Endothelial cell of umbilical vein (primary cell): ENCODE measurements at regions of chr11 and their contacts with region 1.

Region 1: GRCh38 chr11:27296497-27296896 is 66.5 kb downstream of the CCDC34 start:
- DNase-seq: peak; percentile 66
- H3K4me3 ChIP-seq: no peak overlapping the region
- H3K27ac ChIP-seq: no peak overlapping the region
- H3K4me1 ChIP-seq: no peaks in the 10 kb centered on the region
- H3K27me3 ChIP-seq: peaks cover 24% of the 10 kb centered on the region in 2 experiments
- CTCF ChIP-seq: peak; percentile 50 to 56
- POLR2A ChIP-seq: no peak

Region 2: GRCh38 chr11:26993965-26994457 is 302.5 kb before region 1 on chr11 and contains the start of gene FIBIN:
- CTCF ChIA-PET with region 1: no interaction called
- POLR2A ChIA-PET with region 1: no interaction called
- dilution Hi-C with region 1: no loop called
- intact Hi-C with region 1: no loop called
- DNase-seq: no peak
- H3K4me3 ChIP-seq: no peak within 1 kb of the TSS
- H3K27ac ChIP-seq: no peak within 1 kb of the TSS
- H3K4me1 ChIP-seq: no peaks in the 10 kb centered on the region
- H3K27me3 ChIP-seq: no peaks in the 10 kb centered on the region
- CTCF ChIP-seq: no peak
- POLR2A ChIP-seq: no peak
- total RNA-seq, gene FIBIN: not detected in 2 replicates

Region 3: GRCh38 chr11:27183672-27184457 is 112.6 kb before region 1 on chr11:
- CTCF ChIA-PET with region 1: interaction called, 253 read pairs
- POLR2A ChIA-PET with region 1: interaction called, 3 read pairs
- dilution Hi-C with region 1: no loop called
- intact Hi-C with region 1: loop called (anchors 1 kb)
- DNase-seq: peak; percentile 66
- H3K4me3 ChIP-seq: no peak overlapping the region
- H3K27ac ChIP-seq: no peak overlapping the region
- H3K4me1 ChIP-seq: no peaks in the 10 kb centered on the region
- H3K27me3 ChIP-seq: peaks cover 18 to 20% of the 10 kb centered on the region in 2 experiments
- CTCF ChIP-seq: peak; percentile 37 to 46
- POLR2A ChIP-seq: no peak

Region 4: DNA sequence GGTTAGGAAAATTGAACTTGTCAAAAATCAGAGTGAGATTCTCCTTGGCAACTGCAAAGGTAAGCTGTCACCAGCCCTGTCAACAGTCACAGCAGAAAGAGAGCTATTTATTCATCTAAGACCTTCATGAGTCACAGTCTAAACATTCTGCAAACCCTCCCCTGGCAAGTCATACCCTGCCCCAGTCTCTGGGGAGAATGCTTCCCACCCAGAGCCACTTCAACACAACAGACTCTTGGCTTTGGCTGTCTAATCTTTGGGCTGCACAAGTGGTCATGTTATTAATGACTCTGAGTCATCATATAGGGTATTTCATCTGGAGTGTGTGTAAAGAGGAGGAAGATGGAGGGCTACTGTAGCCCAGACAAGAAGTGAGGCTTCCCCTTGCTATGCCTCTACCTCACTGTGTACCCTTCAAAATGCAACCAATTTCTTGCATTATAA is 86.9 kb before region 1 on chr11:
- CTCF ChIA-PET with region 1: interaction called, 183 read pairs
- POLR2A ChIA-PET with region 1: no interaction called
- dilution Hi-C with region 1: no loop called
- intact Hi-C with region 1: loop called (anchors 5 kb)
- DNase-seq: peak; percentile 64
- H3K4me3 ChIP-seq: no peak overlapping the region
- H3K27ac ChIP-seq: no peak overlapping the region
- H3K4me1 ChIP-seq: peaks cover 12% of the 10 kb centered on the region
- H3K27me3 ChIP-seq: peaks cover 68 to 71% of the 10 kb centered on the region in 2 experiments
- CTCF ChIP-seq: no peak
- POLR2A ChIP-seq: no peak

Region 5: GRCh38 chr11:27242591-27242990 is 53.9 kb before region 1 on chr11:
- CTCF ChIA-PET with region 1: interaction called, 10 read pairs
- POLR2A ChIA-PET with region 1: no interaction called
- dilution Hi-C with region 1: no loop called
- intact Hi-C with region 1: no loop called
- DNase-seq: no peak
- H3K4me3 ChIP-seq: no peak overlapping the region
- H3K27ac ChIP-seq: no peak overlapping the region
- H3K4me1 ChIP-seq: no peaks in the 10 kb centered on the region
- H3K27me3 ChIP-seq: peaks cover 27 to 28% of the 10 kb centered on the region in 2 experiments
- CTCF ChIP-seq: no peak
- POLR2A ChIP-seq: no peak

Region 6: GRCh38 chr11:27281740-27282590 is 14.5 kb before region 1 on chr11:
- CTCF ChIA-PET with region 1: interaction called, 64 read pairs
- POLR2A ChIA-PET with region 1: interaction called, 4 read pairs
- dilution Hi-C with region 1: no loop called
- intact Hi-C with region 1: no loop called
- DNase-seq: peak; percentile 99
- H3K4me3 ChIP-seq: no peak overlapping the region
- H3K27ac ChIP-seq: peak overlapping the region; percentile 56
- H3K4me1 ChIP-seq: peaks cover 23% of the 10 kb centered on the region
- H3K27me3 ChIP-seq: peaks cover 13 to 17% of the 10 kb centered on the region in 2 experiments
- CTCF ChIP-seq: no peak
- POLR2A ChIP-seq: peak; percentile 90

Region 7: DNA sequence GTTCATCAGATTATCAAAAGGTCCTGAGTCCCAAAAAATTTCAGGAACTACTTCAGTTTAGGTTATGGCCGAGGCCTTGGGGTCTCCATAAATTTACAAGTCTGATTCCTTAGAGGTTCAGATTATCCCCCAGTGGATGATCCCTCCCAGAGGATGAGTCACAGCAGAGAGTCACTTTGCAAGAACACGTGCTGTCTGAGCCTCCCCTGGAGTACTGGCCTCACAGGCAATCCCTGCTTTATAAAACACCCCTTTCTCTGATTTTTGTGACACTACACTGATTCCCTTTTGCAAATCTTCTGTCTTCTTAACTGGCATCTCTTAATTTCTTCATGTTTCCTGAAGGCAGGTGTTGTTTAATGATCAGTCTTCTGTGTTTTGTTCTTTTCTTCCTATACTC is 21.3 kb after region 1 on chr11:
- CTCF ChIA-PET with region 1: interaction called, 36 read pairs
- POLR2A ChIA-PET with region 1: no interaction called
- dilution Hi-C with region 1: no loop called
- intact Hi-C with region 1: no loop called
- DNase-seq: no peak
- H3K4me3 ChIP-seq: no peak overlapping the region
- H3K27ac ChIP-seq: no peak overlapping the region
- H3K4me1 ChIP-seq: no peaks in the 10 kb centered on the region
- H3K27me3 ChIP-seq: no peaks in the 10 kb centered on the region
- CTCF ChIP-seq: no peak
- POLR2A ChIP-seq: no peak

Region 8: DNA sequence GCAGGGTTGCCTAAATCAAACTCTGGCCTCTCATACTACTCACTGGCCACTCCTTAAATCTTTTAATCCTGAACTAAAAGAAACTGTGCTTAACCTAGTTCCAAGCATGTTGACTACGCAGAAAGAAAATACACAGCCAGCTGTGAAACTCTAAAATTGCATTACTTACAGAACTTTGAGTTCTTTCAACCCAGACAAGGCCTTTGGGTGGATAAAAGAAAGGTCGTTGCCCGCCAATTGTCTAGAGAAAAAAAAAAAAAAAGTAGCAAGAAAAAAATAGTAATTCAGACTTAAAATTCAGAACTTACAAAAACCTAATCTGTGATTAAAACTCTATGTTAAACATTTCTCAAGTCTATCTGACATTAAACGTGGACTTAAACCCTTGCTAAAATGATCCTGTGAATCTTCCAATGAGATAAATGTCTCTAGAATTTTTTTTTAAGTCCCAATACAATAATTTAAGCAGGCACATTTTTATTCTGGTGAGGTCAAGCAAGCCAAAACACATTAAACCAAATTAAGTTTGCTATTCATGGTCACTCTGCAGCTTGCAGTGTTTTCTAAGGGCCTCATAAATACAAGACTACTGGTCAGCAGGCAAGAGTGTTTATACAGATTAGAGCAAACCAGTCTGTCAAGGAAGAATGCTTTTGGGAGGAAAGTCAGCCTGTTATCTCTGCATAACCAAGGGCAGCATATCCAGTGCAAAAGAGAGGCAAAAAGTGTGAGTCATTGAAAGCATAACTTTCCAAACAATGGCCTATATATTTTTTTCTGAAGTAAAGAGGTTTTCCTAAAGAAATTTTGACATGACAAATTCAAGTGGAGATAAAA is 96.0 kb after region 1 on chr11:
- CTCF ChIA-PET with region 1: no interaction called
- POLR2A ChIA-PET with region 1: no interaction called
- dilution Hi-C with region 1: no loop called
- intact Hi-C with region 1: no loop called
- DNase-seq: peak; percentile 81
- H3K4me3 ChIP-seq: no peak overlapping the region
- H3K27ac ChIP-seq: no peak overlapping the region
- H3K4me1 ChIP-seq: peaks cover 6% of the 10 kb centered on the region
- H3K27me3 ChIP-seq: no peaks in the 10 kb centered on the region
- CTCF ChIP-seq: no peak
- POLR2A ChIP-seq: no peak

Region 9: DNA sequence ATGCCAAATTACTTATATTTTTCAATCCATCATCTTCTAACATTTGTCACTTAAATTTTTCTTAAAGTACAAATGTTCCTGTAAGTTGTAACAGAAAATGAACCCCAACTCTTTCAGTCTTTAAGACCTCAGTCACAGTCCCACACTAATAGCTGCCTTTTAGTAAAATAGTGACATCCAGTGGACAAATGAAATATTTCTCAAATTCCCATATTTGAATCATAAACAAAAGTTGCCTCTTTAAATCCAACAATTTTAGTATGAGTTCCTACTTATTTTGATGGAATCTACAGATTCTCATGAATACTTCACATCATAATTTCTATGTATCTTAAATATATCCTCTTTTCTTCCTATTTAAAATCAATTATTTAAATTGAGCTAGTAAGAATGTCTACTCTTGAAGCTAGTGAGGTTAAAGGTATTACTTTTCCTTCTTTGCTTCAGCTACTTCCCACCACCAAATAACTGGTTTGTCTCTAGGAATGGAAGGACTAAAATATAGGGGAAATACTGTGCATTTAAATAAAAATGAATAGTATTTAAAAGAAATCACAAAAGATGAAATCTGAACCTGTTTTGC is 200.9 kb after region 1 on chr11:
- CTCF ChIA-PET with region 1: interaction called, 20 read pairs
- POLR2A ChIA-PET with region 1: no interaction called
- dilution Hi-C with region 1: no loop called
- intact Hi-C with region 1: no loop called
- DNase-seq: peak; percentile 43
- H3K4me3 ChIP-seq: no peak overlapping the region
- H3K27ac ChIP-seq: no peak overlapping the region
- H3K4me1 ChIP-seq: no peaks in the 10 kb centered on the region
- H3K27me3 ChIP-seq: no peaks in the 10 kb centered on the region
- CTCF ChIP-seq: peak; percentile 20 to 30
- POLR2A ChIP-seq: no peak